ENCODE measurements at regions of chr14 and their contacts with region 1.

Region 1: GRCh38 chr14:33792720-33793368 is 158.0 kb downstream of the EGLN3 start:
- DNase-seq: peak; percentile 77
- H3K4me3 Mint-ChIP-seq: no peak overlapping the region
- H3K27ac Mint-ChIP-seq: no peak overlapping the region
- H3K4me1 Mint-ChIP-seq: peaks cover 10% of the 10 kb centered on the region
- H3K27me3 Mint-ChIP-seq: peaks cover 19% of the 10 kb centered on the region

Region 2: GRCh38 chr14:32588448-32589320 is 1204.2 kb before region 1 on chr14:
- CTCF ChIA-PET with region 1: interaction called, 19 read pairs
- DNase-seq: peak; percentile 23
- H3K4me3 Mint-ChIP-seq: no peak overlapping the region
- H3K27ac Mint-ChIP-seq: no peak overlapping the region
- H3K4me1 Mint-ChIP-seq: no peaks in the 10 kb centered on the region
- H3K27me3 Mint-ChIP-seq: no peaks in the 10 kb centered on the region

Region 3: GRCh38 chr14:33781265-33781664 is 11.6 kb before region 1 on chr14:
- CTCF ChIA-PET with region 1: interaction called, 20 read pairs
- DNase-seq: no peak
- H3K4me3 Mint-ChIP-seq: no peak overlapping the region
- H3K27ac Mint-ChIP-seq: no peak overlapping the region
- H3K4me1 Mint-ChIP-seq: no peaks in the 10 kb centered on the region
- H3K27me3 Mint-ChIP-seq: no peaks in the 10 kb centered on the region

Region 4: DNA sequence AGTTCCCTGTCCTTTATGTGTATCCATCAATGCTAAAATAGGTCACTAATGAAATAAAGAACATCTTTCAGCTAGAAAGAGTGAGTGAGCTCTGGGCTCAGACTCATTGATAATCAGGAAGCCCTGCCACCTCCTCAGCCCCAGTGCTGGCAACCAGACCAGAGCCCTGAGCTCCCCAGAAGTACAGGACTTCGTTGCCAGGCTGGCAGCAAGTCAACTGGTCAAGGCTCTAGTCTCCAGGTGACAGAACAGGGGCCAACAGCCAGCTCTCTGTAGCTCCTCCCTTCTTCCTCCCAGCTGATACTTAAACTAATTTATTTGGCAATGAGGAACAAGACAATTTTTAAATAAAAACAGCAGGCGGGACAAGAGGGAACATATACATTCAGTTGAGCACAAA is 12.7 kb after region 1 on chr14:
- CTCF ChIA-PET with region 1: interaction called, 19 read pairs
- DNase-seq: no peak
- H3K4me3 Mint-ChIP-seq: no peak overlapping the region
- H3K27ac Mint-ChIP-seq: no peak overlapping the region
- H3K4me1 Mint-ChIP-seq: peaks cover 3% of the 10 kb centered on the region
- H3K27me3 Mint-ChIP-seq: peaks cover 22% of the 10 kb centered on the region